Activated naive CD4-positive, alpha-beta T cell treated with anti-CD3 and anti-CD28 coated beads for 36 hours (primary cell): ENCODE measurements at regions of chr3 and their contacts with region 1.

Region 1: GRCh38 chr3:126389112-126389793 is 5.5 kb upstream of the CFAP100 start:
- DNase-seq: peak; percentile 59
- H3K4me3 Mint-ChIP-seq: no peak overlapping the region
- H3K27ac Mint-ChIP-seq: no peak overlapping the region
- H3K4me1 Mint-ChIP-seq: peaks cover 3% of the 10 kb centered on the region
- H3K27me3 Mint-ChIP-seq: peaks cover 60% of the 10 kb centered on the region

Region 2: GRCh38 chr3:126134219-126134975 is 254.9 kb before region 1 on chr3:
- CTCF ChIA-PET with region 1: interaction called, 5 read pairs
- intact Hi-C with region 1: loop called (anchors 1 kb)
- DNase-seq: peak; percentile 67
- H3K4me3 Mint-ChIP-seq: no peak overlapping the region
- H3K27ac Mint-ChIP-seq: no peak overlapping the region
- H3K4me1 Mint-ChIP-seq: no peaks in the 10 kb centered on the region
- H3K27me3 Mint-ChIP-seq: peaks cover 15% of the 10 kb centered on the region

Region 3: GRCh38 chr3:126197854-126198584 is 191.2 kb before region 1 on chr3:
- CTCF ChIA-PET with region 1: no interaction called
- intact Hi-C with region 1: loop called (anchors 1 kb)
- DNase-seq: peak; percentile 78
- H3K4me3 Mint-ChIP-seq: no peak overlapping the region
- H3K27ac Mint-ChIP-seq: no peak overlapping the region
- H3K4me1 Mint-ChIP-seq: no peaks in the 10 kb centered on the region
- H3K27me3 Mint-ChIP-seq: peaks cover 7% of the 10 kb centered on the region

Region 4: GRCh38 chr3:126245811-126246727 is 143.2 kb before region 1 on chr3:
- CTCF ChIA-PET with region 1: interaction called, 10 read pairs
- intact Hi-C with region 1: loop called (anchors 1 kb)
- DNase-seq: peak; percentile 60
- H3K4me3 Mint-ChIP-seq: no peak overlapping the region
- H3K27ac Mint-ChIP-seq: no peak overlapping the region
- H3K4me1 Mint-ChIP-seq: no peaks in the 10 kb centered on the region
- H3K27me3 Mint-ChIP-seq: peaks cover 9% of the 10 kb centered on the region

Region 5: GRCh38 chr3:126259411-126260391 is 129.6 kb before region 1 on chr3:
- CTCF ChIA-PET with region 1: no interaction called
- intact Hi-C with region 1: loop called (anchors 1 kb)
- DNase-seq: peak; percentile 46
- H3K4me3 Mint-ChIP-seq: no peak overlapping the region
- H3K27ac Mint-ChIP-seq: no peak overlapping the region
- H3K4me1 Mint-ChIP-seq: peaks cover 2% of the 10 kb centered on the region
- H3K27me3 Mint-ChIP-seq: peaks cover 14% of the 10 kb centered on the region